Activated B cell treated with CpG ODN at 0.5 μM for 24 hours (primary cell): ENCODE measurements at regions of chr12 and their contacts with region 1.

Region 1: GRCh38 chr12:48924617-48925303 is 532 bp downstream of the FKBP11 start:
- DNase-seq: peak; percentile 69
- ATAC-seq: peak; percentile 83
- H3K4me3 Mint-ChIP-seq: peak overlapping the region; percentile 97
- H3K27ac Mint-ChIP-seq: peak overlapping the region; percentile 94
- H3K4me1 Mint-ChIP-seq: peaks cover 27% of the 10 kb centered on the region
- H3K27me3 Mint-ChIP-seq: no peaks in the 10 kb centered on the region
- CTCF ChIP-seq: peak; percentile 42

Region 2: DNA sequence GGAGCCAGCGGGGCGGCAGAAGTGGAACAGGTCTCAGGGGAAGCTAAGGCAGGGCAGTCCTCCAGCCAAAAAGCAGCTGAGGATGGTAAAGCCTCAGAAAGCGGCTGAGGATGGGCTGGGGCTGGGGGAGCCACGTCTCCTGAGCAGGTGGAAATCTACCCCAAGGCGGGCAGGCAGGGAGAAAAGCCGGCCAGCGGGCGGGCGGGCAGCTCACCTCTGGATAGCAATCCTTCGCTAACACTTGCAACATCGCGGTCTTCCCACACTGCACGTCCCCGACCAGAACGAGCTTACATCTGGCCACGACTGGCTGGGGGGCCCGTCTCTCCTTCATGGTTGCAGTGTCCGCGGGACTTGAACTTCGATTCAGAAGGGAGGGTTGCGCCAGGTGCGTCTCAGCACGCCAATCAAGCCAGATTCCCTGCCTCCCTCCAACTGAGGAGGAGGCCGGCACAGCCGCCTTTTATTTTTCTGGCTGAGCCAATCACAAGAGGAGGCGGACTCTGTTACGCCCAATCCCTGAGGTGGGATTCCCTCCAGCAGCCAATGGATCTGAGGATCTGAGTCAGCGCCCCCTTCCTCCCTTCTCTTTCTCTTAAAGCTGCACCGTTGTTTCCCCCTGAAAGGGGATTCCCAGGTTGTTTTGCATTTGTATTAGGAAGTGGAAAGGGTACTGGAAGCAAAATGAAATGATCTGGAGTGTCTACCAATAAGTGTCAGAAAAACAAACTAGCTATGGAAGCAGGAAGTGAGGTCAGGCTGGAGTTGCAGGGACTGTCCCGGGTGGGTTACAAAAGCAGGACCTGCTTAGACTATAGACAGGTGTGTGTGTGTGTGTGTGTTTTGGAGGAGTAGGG is 59.1 kb before region 1 on chr12 and contains the start of gene RND1:
- CTCF ChIA-PET with region 1: no interaction called
- POLR2A ChIA-PET with region 1: interaction called, 5 read pairs
- intact Hi-C with region 1: loop called (anchors 2 kb)
- DNase-seq: peak; percentile 64
- ATAC-seq: peak; percentile 90
- H3K4me3 Mint-ChIP-seq: peak within 1 kb of the TSS; percentile 95
- H3K27ac Mint-ChIP-seq: peak within 1 kb of the TSS; percentile 78
- H3K4me1 Mint-ChIP-seq: peaks cover 27% of the 10 kb centered on the region
- H3K27me3 Mint-ChIP-seq: no peaks in the 10 kb centered on the region
- CTCF ChIP-seq: no peak
- total RNA-seq, gene RND1: 4.9 and 5.9 TPM in 2 replicates

Region 3: DNA sequence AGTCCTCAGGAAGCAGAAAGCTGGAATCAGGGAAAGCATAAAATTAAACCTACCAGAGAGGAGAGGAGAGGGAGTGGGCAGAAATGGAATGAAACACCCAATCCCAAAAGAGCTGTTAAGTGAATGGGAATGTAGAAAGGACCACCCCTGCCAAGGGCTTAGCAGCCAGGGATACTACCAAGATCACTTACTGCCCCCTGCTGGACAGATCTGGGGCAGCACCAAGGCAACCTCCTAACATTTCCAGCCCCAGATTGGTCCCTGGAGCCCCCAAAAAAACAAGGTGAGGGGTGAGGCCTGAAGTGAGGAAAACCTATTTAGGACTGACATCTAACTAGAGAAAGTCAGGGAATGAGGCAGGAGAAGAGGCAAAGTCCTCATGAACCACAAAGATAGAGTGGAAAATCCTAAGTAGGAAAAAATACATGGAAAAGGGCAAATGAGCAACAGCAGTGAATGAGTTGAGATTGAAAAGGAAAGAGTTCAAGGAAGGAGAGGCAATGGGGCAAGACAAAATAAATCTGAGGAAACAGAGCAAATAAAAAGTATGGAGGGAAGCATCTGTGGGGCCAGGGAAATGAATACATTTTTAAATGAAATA is 11.7 kb after region 1 on chr12:
- CTCF ChIA-PET with region 1: interaction called, 34 read pairs
- POLR2A ChIA-PET with region 1: interaction called, 6 read pairs
- intact Hi-C with region 1: loop called (anchors 1 kb)
- DNase-seq: peak; percentile 68
- ATAC-seq: peak; percentile 74
- H3K4me3 Mint-ChIP-seq: no peak overlapping the region
- H3K27ac Mint-ChIP-seq: no peak overlapping the region
- H3K4me1 Mint-ChIP-seq: peaks cover 36% of the 10 kb centered on the region
- H3K27me3 Mint-ChIP-seq: no peaks in the 10 kb centered on the region
- CTCF ChIP-seq: peak; percentile 26

Region 4: DNA sequence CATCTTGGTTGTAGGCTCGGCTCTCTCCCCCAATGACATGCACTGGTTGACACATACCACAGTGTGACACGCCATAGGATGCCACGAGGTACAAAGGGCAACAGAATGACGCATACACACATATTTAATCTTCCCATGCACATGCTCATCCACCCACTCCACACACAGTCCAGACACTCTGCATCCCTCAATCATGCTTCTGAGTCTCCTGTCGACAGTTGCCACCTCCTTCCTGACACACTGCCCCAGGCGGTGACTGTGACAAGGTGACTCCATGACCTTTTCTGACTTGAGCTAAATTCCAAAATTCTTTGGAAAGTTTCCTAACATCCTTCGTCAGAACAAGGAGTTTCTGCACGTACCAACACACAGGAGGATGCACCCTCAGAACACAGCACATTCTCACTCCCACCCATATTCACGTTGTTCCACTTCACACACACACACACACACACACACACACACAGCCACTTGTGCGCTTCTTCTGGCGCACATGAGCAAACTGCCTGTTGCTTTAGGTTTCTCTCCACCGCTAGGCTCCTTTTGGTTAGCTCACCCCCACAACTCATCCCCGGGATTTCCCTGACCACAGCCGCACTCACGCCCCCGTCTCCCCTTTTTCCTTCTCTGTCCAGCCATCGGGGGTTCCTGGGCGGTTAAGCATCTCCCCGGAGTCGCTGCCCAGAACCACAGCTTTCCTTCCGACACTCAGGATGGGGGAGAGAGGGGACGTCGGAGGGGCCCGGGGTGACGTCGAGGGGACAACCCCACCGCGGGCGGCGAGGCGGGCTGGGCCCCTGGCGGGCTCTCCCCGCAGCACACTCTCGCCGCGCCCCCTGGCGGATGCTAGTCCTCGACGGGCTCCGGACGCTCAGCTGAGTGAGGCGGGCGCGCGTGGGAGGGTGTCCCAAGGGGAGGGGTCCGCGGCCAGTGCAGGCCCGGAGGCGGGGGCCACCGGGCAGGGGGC is 52.8 kb after region 1 on chr12:
- CTCF ChIA-PET with region 1: interaction called, 74 read pairs
- POLR2A ChIA-PET with region 1: interaction called, 9 read pairs
- intact Hi-C with region 1: loop called (anchors 1 kb)
- DNase-seq: peak; percentile 79
- ATAC-seq: peak; percentile 72
- H3K4me3 Mint-ChIP-seq: peak overlapping the region; percentile 68
- H3K27ac Mint-ChIP-seq: peak overlapping the region; percentile 64
- H3K4me1 Mint-ChIP-seq: peaks cover 42% of the 10 kb centered on the region
- H3K27me3 Mint-ChIP-seq: peaks cover 50% of the 10 kb centered on the region
- CTCF ChIP-seq: peak; percentile 45

Region 5: DNA sequence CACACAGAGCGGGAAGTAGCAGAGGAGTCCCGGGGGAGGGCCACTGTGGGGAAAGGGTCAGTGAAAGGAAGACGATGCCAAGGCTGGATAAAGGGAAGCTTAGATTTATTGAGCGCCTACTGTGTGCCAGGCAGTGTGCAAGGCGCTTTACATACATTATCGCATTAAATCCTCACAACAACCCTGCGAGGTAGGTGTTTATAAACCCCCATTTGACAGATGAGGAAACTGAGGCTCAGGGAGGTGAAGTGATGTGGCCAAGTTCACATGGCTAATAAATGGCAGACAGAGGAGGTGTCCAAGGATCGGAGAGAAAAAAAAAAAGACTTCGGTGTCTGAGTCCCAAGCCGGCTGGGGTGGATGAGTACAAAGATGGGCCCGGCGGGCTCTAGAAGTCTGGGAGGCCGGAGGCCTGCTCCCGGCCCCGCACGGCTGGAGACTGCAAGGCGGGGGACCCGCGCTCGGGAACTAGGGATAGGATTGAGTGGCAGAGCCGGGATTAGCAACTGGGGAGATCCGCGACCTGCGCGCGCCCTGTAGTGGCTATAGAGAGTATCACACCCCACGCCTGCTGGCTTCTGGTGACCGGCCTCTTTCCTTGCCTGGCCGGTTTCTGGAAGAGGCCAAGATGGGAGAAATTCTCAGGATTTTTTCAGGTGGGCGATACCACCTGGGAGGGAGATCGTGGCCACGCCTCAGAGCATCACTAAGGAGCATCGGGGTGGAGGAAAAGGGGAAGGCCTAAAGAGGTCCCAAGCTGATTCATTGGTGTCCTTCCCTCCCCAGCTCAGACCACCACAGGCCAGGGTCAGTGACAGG is 70.5 kb after region 1 on chr12:
- CTCF ChIA-PET with region 1: interaction called, 26 read pairs
- POLR2A ChIA-PET with region 1: no interaction called
- intact Hi-C with region 1: loop called (anchors 1 kb)
- DNase-seq: no peak
- ATAC-seq: peak; percentile 23
- H3K4me3 Mint-ChIP-seq: peak overlapping the region; percentile 67
- H3K27ac Mint-ChIP-seq: no peak overlapping the region
- H3K4me1 Mint-ChIP-seq: peaks cover 38% of the 10 kb centered on the region
- H3K27me3 Mint-ChIP-seq: peaks cover 28% of the 10 kb centered on the region
- CTCF ChIP-seq: no peak

Region 6: GRCh38 chr12:49060237-49061156 is 135.7 kb after region 1 on chr12 and contains the start of gene KMT2D:
- CTCF ChIA-PET with region 1: no interaction called
- POLR2A ChIA-PET with region 1: no interaction called
- intact Hi-C with region 1: loop called (anchors 1 kb)
- DNase-seq: peak; percentile 83
- ATAC-seq: peak; percentile 67
- H3K4me3 Mint-ChIP-seq: peak within 1 kb of the TSS; percentile 97
- H3K27ac Mint-ChIP-seq: peak within 1 kb of the TSS; percentile 97
- H3K4me1 Mint-ChIP-seq: peaks cover 50% of the 10 kb centered on the region
- H3K27me3 Mint-ChIP-seq: no peaks in the 10 kb centered on the region
- CTCF ChIP-seq: no peak
- total RNA-seq, gene KMT2D: 127 and 136 TPM in 2 replicates